Mammary epithelial cell (primary cell): ENCODE measurements at regions of chr15 and their contacts with region 1.

Region 1: GRCh38 chr15:70435369-70435768 is 328.0 kb downstream of the UACA start:
- DNase-seq: no peak
- H3K4me3 ChIP-seq: no peak overlapping the region
- H3K27ac ChIP-seq: no peak overlapping the region
- H3K4me1 ChIP-seq: peaks cover 10% of the 10 kb centered on the region
- H3K27me3 ChIP-seq: no peaks in the 10 kb centered on the region
- CTCF ChIP-seq: no peak

Region 2: DNA sequence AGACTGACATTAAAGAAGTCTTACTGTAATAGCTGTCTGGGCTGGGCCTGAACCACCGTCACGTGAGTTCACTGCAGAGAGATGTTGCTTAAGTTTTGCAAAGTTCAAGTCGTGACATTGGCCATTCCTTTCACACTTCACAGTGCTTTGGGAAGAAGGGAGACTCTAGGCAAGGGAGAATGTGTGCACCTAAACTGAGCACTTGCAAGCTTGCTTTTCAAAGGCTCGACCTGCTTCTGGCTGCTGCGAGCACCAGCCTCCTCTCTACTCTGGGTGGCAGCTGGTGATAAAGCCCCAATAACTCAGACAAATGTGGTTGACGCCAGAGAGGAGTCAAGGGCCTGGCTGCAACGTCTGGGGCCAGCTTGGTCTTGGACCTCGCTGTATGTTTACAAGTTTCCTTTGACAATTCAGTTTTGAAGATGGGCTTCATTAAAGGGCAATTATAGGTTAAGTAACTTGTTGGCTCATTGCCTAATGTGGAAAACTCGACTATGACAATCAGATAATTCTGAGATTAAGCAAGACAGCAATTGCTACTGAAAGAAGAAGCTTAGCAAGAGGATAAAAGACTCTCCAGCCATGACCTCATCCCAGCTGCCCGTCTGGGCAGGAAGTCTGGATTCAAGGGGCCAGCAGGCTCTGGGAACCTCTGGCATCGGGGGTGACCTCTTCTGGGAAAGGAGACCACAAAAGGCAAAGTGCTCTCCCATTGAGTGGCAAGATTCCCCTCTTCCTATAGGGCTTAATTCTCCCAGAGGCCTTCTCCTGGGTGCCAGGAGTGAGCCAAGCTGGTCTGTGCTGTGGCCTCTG is 95.5 kb before region 1 on chr15:
- CTCF ChIA-PET with region 1: no interaction called
- dilution Hi-C with region 1: loop called (anchors 5 kb)
- in situ Hi-C with region 1: no loop called
- intact Hi-C with region 1: no loop called
- DNase-seq: no peak
- H3K4me3 ChIP-seq: no peak overlapping the region
- H3K27ac ChIP-seq: no peak overlapping the region
- H3K4me1 ChIP-seq: no peaks in the 10 kb centered on the region
- H3K27me3 ChIP-seq: peaks cover 9% of the 10 kb centered on the region
- CTCF ChIP-seq: no peak

Region 3: DNA sequence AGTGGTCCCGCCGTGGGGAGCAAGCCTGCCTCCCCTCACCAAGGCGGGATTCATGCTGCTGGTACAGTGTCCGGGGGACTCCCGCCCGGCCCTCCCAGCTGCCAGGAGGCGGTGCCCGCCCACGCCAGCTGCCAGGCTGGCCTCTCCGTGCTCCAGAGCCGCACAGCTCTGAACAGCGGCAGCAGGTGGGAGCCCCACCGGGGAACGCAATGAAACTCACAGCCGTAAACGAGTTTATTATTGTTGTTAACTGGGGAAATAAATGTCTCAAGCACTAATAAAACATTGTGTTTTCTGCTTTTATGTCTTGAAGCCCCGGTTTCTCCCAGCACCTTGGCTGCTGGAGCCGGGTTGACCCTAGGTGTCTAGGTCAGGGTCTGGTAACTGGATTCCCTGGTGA is 20.0 kb before region 1 on chr15:
- CTCF ChIA-PET with region 1: no interaction called
- dilution Hi-C with region 1: no loop called
- in situ Hi-C with region 1: no loop called
- intact Hi-C with region 1: no loop called
- DNase-seq: no peak
- H3K4me3 ChIP-seq: no peak overlapping the region
- H3K27ac ChIP-seq: no peak overlapping the region
- H3K4me1 ChIP-seq: no peaks in the 10 kb centered on the region
- H3K27me3 ChIP-seq: peaks cover 21% of the 10 kb centered on the region
- CTCF ChIP-seq: no peak

Region 4: GRCh38 chr15:70763120-70763878 is 327.9 kb after region 1 on chr15 and contains the start of gene UACA:
- CTCF ChIA-PET with region 1: no interaction called
- dilution Hi-C with region 1: no loop called
- in situ Hi-C with region 1: no loop called
- intact Hi-C with region 1: no loop called
- DNase-seq: peak; percentile 98
- H3K4me3 ChIP-seq: peak within 1 kb of the TSS; percentile 74 to 94 (median 91)
- H3K27ac ChIP-seq: peak within 1 kb of the TSS; percentile 82
- H3K4me1 ChIP-seq: peaks cover 13% of the 10 kb centered on the region
- H3K27me3 ChIP-seq: no peaks in the 10 kb centered on the region
- CTCF ChIP-seq: no peak
- total RNA-seq, gene UACA: 19.2 to 39.6 TPM